ENCODE measurements at regions of chr17 and their contacts with region 1.

Region 1: DNA sequence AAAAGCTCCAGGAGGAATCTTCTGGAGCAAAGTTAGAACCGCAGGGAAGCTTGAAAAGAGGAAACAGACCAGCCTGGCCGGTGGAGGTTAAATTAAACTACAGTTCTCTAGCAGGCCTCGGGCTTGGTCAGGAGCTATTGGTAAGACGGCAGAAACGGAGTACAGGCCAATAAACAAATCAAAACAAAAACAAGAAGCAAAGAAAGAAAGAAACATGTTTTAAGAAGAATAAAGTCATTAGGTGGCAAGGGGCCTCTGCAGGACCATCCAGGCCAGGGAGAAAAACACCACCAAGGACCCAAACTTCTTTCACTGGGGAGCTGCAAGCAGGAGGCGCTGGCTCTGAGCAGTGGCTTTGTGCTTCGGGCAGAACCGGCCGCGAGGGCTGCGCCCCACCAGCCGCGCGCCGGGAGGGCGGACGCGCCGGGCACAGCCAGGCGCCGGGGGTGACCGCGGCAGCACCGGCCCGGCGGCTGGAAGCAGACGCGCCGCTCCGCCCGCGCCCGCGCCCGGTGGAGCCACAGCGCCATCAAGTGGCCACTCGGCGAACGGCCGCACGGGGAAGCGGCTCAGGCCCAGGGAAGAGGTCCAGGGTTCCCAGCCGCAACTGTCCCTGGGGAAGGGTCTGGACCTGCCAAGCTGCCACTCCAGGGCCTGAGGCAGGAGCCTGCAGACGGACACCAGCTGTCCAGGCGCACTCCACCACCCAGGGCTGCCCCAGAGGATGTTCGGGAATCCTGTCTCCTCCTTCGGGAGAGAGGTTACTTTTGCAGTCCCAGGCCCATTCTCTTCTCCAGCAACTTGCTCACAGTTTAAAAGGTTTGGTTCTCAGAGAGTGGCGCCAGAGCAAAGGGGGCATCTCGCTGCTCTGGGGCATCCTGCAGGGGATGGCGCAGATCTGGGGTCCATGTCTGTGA is 419.4 kb downstream of the SOX9 start:
- DNase-seq: peak; percentile 79
- H3K27ac ChIP-seq: peak overlapping the region; percentile 69
- CTCF ChIP-seq: peak; percentile 99

Region 2: DNA sequence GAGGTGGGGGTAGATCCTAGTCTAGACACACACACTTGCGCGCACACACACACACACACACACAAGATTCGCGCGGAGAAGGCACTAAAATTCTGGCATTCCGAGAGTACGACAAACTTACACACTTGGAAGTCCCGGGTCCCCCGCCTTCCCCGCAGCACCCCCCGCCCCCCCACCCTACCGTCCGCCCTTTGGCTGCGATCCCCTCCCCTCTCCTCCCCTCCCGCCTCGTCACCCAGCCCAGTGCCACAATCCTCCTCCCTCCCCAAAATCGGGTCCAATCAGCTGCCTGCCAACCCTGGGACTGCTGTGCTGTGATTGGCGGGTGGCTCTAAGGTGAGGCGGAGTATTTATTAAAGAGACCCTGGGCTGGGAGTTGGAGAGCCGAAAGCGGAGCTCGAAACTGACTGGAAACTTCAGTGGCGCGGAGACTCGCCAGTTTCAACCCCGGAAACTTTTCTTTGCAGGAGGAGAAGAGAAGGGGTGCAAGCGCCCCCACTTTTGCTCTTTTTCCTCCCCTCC is 419.5 kb before region 1 on chr17 and contains the start of gene SOX9:
- CTCF ChIA-PET with region 1: interaction called, 12 read pairs
- POLR2A ChIA-PET with region 1: interaction called, 3 read pairs
- DNase-seq: peak; percentile 99
- H3K27ac ChIP-seq: peak within 1 kb of the TSS; percentile 89
- CTCF ChIP-seq: no peak

Region 3: DNA sequence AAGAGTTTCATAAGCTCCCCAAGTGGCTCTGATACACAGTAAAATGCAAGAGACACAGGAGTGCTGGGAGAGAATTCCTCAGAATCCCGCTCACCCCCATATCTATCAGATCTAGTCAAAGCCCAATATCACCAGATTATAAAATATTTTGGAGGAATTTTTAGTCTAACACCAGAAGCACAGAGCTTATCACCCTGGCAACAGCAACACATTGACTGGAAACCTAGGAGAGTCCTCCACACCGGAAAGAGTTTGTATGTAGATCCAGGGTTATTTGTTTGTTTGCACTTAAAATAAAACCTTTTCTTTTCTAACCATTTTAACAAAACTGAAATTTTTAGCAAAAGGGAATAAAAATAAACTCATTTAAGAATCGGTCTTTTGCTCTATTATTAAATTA is 412.2 kb before region 1 on chr17:
- CTCF ChIA-PET with region 1: interaction called, 10 read pairs
- POLR2A ChIA-PET with region 1: no interaction called
- DNase-seq: no peak
- H3K27ac ChIP-seq: no peak overlapping the region
- CTCF ChIP-seq: no peak

Measured in RWPE1 (cell line).